HEK293 (cell line): ENCODE measurements at regions of chr15 and their contacts with region 1.

Region 1: DNA sequence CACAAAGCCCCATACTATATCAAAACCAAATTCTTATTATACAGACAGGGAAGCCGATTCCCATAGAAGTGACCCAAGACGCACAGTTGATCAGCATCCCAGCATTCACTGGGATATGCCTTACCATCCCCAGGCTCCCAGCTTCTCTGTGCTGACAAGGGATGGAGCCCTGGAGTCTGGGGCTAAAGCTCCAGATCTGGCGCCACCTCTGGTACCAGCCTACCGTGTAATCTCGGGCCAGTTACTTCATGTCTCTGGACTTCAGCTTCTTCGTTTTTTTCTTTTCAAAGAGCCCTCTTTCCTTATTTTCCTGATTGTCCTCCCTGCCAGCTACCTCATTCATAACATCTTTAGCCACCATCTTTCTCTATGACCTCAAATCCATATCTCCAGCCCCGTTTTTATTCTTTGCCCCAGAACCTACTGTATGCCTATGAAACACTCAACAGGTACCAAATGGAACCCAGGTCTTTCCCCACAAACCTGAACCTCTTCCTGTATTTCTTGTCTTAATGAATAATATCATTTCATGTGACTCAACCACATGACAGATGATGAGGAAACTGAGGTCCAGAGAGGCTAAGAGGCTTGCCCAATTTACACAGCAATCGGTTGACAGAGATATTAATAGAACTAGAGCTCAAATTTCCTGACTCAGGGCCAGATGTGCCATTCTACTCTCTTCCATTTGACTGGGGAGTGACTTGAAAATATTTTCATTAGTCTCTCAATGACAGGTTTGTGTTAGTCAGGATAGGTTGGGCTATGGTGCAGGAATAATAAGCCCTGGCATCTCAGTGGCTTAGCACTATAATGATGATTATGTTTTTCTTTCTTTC is 85.4 kb upstream of the TLE3 start:
- H3K4me3 ChIP-seq: no peak overlapping the region
- H3K27ac ChIP-seq: no peak overlapping the region
- H3K4me1 ChIP-seq: peaks cover 5% of the 10 kb centered on the region
- CTCF ChIP-seq: peak; percentile 43; the same call in 1 of the 2 replicates

Region 2: GRCh38 chr15:69893863-69894262 is 289.2 kb before region 1 on chr15:
- CTCF ChIA-PET with region 1: no interaction called
- POLR2A ChIA-PET with region 1: no interaction called
- H3K4me3 ChIP-seq: no peak overlapping the region
- H3K27ac ChIP-seq: no peak overlapping the region
- H3K4me1 ChIP-seq: peaks cover 16% of the 10 kb centered on the region; the same call in 1 of the 2 replicates
- CTCF ChIP-seq: no peak

Region 3: GRCh38 chr15:70091726-70092463 is 91.2 kb before region 1 on chr15:
- CTCF ChIA-PET with region 1: interaction called, 10 read pairs
- POLR2A ChIA-PET with region 1: interaction called, 3 read pairs
- H3K4me3 ChIP-seq: no peak overlapping the region
- H3K27ac ChIP-seq: peak overlapping the region; percentile 99
- H3K4me1 ChIP-seq: peaks cover 62% of the 10 kb centered on the region
- CTCF ChIP-seq: no peak

Region 4: DNA sequence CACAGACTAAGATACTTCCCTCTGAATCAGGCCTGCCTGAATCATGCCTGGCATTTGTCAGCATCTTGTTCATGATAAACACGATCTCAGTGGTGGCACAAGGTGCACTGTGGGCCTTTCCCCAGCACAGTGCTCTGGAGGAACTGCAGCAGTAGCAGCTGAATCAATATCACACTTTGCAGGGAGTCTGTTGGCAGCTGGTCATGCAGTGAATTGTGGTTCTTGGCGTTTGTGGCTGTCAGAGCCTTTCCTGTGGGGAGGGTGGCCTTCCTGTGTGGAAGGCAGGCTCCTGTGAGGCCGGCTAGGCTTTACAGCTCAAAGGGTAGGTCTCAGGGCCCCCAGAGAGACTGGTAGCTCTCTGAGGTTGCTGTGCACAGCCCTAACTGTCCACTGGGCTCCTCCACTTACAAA is 31.0 kb before region 1 on chr15:
- CTCF ChIA-PET with region 1: interaction called, 10 read pairs
- POLR2A ChIA-PET with region 1: no interaction called
- H3K4me3 ChIP-seq: no peak overlapping the region
- H3K27ac ChIP-seq: peak overlapping the region; percentile 33; the same call in 1 of the 2 replicates
- H3K4me1 ChIP-seq: peaks cover 42% of the 10 kb centered on the region
- CTCF ChIP-seq: no peak